ENCODE measurements at regions of chr10 and their contacts with region 1.

Region 1: DNA sequence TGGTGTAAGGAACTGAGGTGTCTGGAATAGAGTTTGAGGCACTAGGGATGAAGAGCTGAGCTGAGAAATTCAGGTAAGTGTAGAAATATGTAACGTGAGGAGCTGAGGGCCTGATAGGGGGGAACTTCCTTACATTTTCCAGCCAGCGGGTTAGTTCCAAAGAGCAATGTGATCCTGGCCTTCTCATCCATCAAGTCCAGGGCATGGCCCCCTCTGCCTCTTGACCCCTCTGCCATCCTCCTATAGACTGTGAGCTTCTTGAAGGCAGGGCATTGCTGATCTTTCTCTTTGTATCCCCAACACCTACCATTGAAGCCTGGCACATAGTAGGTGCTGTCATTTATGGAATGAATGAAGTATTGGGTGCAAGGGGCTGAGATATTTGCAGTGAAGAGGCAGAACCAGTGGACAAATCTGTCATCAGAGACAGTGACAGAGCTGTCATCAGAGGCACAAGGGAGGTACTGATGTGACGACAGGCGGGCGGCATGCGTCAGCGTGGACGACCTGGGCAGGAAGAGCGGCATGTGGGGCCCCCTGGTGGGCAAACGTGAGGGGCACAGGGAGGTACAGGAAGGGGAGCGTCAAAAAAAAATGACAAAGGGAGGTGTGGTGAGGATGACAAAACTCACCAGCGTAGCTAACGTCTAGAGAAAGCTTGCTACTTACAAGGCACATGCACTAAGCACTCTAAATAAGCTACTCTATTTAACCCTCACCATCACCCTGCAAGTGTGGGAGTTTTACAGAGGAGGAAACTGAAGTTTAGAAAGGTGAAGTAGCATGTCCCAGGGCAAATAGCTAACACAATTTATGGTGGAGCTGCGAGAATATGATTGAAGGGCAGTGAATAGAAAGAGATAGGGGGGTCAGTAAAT is 5.2 kb upstream of the CAMK2G start:
- DNase-seq: peak; percentile 81
- ATAC-seq: peak; percentile 82
- H3K4me3 Mint-ChIP-seq: no peak overlapping the region
- H3K27ac Mint-ChIP-seq: 0 out of 2 replicates have a peak overlapping the region, but pooled peaks have one; percentile 35
- H3K4me1 Mint-ChIP-seq: peaks cover 23% of the 10 kb centered on the region
- H3K27me3 Mint-ChIP-seq: no peaks in the 10 kb centered on the region; the same call in 1 of the 2 replicates
- CTCF ChIP-seq: peak; percentile 77

Region 2: DNA sequence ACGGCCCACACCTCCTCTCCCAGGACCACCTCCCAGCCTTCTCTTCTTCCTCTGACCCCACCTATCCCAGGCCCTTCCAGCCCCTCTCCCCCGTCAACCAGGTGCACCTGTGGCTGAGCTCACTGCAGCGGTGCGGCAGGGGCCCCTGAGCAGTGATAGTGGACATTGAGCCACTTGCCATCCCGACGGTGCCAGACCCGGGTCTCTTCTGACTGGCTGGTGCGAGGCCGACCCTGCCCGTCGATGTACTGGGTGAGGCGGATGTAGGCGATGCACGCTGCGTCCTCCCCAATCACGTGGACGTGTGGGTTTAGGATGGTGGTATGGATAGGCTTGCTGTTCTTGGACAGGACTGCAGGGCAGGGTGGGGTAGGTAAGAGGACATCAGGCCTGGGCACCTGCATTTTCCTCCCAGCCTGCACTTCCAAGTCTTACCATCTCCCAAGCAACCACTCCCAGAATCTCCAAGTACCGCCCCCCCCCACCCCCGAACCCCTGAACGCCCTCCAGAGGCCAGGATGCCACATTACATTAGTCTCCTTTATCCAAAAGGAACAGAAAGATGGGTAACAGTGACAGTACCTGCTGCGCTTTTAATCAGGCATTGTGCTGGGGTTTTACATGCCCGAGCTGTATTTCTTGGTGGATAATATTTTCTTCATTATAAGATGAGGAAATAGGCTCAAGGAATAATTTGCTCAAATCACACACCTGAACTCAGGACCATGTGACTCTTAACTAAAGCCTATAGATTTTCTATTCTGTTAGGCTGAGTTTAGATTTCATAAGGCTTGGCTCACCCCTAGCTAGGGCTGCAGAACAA is 64.4 kb before region 1 on chr10:
- CTCF ChIA-PET with region 1: interaction called, 22 read pairs
- POLR2A ChIA-PET with region 1: no interaction called
- DNase-seq: peak; percentile 42
- ATAC-seq: no peak
- H3K4me3 Mint-ChIP-seq: no peak overlapping the region
- H3K27ac Mint-ChIP-seq: no peak overlapping the region
- H3K4me1 Mint-ChIP-seq: peaks cover 10% of the 10 kb centered on the region
- H3K27me3 Mint-ChIP-seq: no peaks in the 10 kb centered on the region
- CTCF ChIP-seq: peak; percentile 66

Region 3: GRCh38 chr10:73857446-73857845 is 22.1 kb before region 1 on chr10:
- CTCF ChIA-PET with region 1: interaction called, 75 read pairs
- POLR2A ChIA-PET with region 1: no interaction called
- DNase-seq: no peak
- ATAC-seq: no peak
- H3K4me3 Mint-ChIP-seq: no peak overlapping the region
- H3K27ac Mint-ChIP-seq: peak overlapping the region; percentile 20; the same call in 1 of the 2 replicates
- H3K4me1 Mint-ChIP-seq: peaks cover 29% of the 10 kb centered on the region
- H3K27me3 Mint-ChIP-seq: no peaks in the 10 kb centered on the region
- CTCF ChIP-seq: no peak

Region 4: DNA sequence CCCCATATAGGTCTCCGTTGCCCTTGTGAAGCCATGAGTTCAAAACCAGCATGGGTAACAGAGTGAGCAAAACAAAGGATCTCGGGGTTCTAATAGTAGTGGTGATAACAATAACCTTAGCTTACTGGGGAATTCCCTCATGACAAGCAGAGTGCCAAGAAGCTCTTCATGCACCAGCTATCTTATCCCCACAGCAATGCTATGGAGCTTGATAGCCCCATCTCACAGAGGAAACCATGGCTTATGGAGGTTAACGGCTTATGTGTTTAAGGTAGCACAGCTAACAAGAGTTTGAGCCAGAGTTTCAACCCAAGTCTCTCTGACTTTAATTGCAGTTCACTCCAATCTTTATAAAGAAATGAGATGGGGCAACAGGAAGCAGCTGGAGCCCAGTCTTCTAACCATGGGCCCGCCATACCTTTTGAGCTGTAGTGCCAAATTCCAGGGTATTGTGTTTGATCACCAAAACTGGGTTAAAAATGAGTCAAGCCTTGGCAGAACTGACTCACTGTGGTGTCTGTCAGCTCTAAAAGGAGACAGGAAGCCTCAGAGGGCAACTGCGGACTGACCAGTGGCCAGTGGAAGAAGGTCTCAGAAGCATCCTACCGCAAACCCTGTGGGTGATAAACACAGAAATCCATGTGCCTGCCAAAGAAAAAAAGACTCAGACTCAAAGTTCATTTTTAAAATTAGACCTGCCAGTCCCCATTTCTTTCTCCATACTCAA is 14.9 kb after region 1 on chr10:
- CTCF ChIA-PET with region 1: interaction called, 37 read pairs
- POLR2A ChIA-PET with region 1: no interaction called
- DNase-seq: no peak
- ATAC-seq: no peak
- H3K4me3 Mint-ChIP-seq: no peak overlapping the region
- H3K27ac Mint-ChIP-seq: no peak overlapping the region
- H3K4me1 Mint-ChIP-seq: peaks cover 3% of the 10 kb centered on the region; the same call in 1 of the 2 replicates
- H3K27me3 Mint-ChIP-seq: no peaks in the 10 kb centered on the region
- CTCF ChIP-seq: no peak

Region 5: GRCh38 chr10:73908853-73909538 is 29.5 kb after region 1 on chr10:
- CTCF ChIA-PET with region 1: interaction called, 15 read pairs
- POLR2A ChIA-PET with region 1: no interaction called
- DNase-seq: no peak
- ATAC-seq: no peak
- H3K4me3 Mint-ChIP-seq: no peak overlapping the region
- H3K27ac Mint-ChIP-seq: no peak overlapping the region
- H3K4me1 Mint-ChIP-seq: peaks cover 60% of the 10 kb centered on the region
- H3K27me3 Mint-ChIP-seq: peaks cover 46% of the 10 kb centered on the region
- CTCF ChIP-seq: no peak

Region 6: DNA sequence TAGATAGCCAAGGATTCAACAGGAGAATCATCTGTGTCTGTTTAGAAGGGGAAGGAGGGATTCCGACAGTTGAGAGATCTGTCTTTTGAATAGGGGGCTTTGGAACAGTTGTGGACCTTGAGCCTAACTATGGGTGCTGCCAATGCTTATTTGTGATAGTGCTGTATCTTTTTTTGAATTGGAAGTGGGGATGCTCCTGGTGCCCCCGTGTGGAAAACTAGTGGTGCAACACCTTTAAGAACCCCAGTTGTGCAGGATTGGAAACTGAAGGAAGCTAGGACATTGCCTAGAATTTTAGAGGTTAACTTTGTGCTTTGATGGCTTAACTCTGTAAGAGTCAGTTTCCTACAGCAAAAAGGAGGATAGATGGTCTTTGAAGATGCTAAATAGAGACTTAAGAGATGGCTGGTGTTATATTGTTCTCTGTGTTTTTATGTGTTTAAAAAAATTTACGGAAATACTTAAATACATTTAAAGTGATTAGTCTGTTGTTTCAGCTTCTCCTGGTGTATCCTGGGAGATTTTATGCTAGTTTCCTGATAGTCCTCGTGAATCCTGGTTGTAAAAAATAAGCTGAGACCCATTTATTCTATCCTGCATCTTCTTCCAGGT is 201.8 kb after region 1 on chr10:
- CTCF ChIA-PET with region 1: interaction called, 21 read pairs
- POLR2A ChIA-PET with region 1: no interaction called
- DNase-seq: peak; percentile 40
- ATAC-seq: peak; percentile 71
- H3K4me3 Mint-ChIP-seq: no peak overlapping the region
- H3K27ac Mint-ChIP-seq: peak overlapping the region; percentile 54; the same call in 1 of the 2 replicates
- H3K4me1 Mint-ChIP-seq: peaks cover 52% of the 10 kb centered on the region
- H3K27me3 Mint-ChIP-seq: no peaks in the 10 kb centered on the region
- CTCF ChIP-seq: peak; percentile 59

Measured in WTC11 (cell line).